Prostate gland (tissue), 2 donors: ENCODE measurements at regions of chr13 and their contacts with region 1.

Region 1: GRCh38 chr13:73943137-73943964 is 190.9 kb downstream of the KLF12 start:
- DNase-seq: no peak
- H3K4me3 ChIP-seq: no peak overlapping the region
- H3K27ac ChIP-seq: no peak overlapping the region
- H3K4me1 ChIP-seq: no peaks in the 10 kb centered on the region
- H3K27me3 ChIP-seq: no peaks in the 10 kb centered on the region
- CTCF ChIP-seq: no peak
- POLR2A ChIP-seq: no peak

Region 2: GRCh38 chr13:74145249-74145975 is 202.1 kb after region 1 on chr13:
- intact Hi-C with region 1: no loop called
- DNase-seq: no peak
- H3K4me3 ChIP-seq: no peak overlapping the region
- H3K27ac ChIP-seq: no peak overlapping the region
- H3K4me1 ChIP-seq: no peaks in the 10 kb centered on the region
- H3K27me3 ChIP-seq: no peaks in the 10 kb centered on the region
- CTCF ChIP-seq: no peak
- POLR2A ChIP-seq: no peak

Region 3: DNA sequence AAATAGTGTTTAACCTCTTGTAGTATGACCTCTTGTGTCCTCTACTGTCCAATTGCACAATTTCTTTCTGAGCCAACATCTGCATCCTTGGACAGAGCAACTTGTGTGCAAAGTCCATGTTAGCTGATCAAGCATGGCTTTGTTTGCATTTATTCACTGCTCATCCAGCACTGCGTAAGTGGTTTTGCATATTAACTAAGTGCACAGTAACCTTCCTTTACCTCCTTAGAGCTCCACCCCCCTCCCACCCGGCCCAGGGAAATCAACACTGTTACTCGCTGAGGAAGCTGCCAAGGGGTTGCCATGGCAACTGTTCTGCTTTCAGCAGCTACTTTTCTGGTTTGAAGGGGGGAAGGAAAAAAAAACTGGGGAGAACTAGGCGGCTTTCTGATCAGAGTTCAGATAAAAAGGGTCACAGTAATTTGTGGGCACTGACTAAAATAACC is 344.4 kb after region 1 on chr13:
- intact Hi-C with region 1: loop called (anchors 5 kb)
- DNase-seq: peak; percentile 25
- H3K4me3 ChIP-seq: no peak overlapping the region
- H3K27ac ChIP-seq: no peak overlapping the region
- H3K4me1 ChIP-seq: peaks cover 7% of the 10 kb centered on the region
- H3K27me3 ChIP-seq: no peaks in the 10 kb centered on the region
- CTCF ChIP-seq: no peak
- POLR2A ChIP-seq: no peak